ENCODE measurements at regions of chr6 and their contacts with region 1.

Region 1: GRCh38 chr6:121430514-121431460 is 4.7 kb upstream of the GJA1 start:
- DNase-seq: no peak
- H3K4me3 ChIP-seq: no peak overlapping the region
- CTCF ChIP-seq: peak; percentile 54

Region 2: DNA sequence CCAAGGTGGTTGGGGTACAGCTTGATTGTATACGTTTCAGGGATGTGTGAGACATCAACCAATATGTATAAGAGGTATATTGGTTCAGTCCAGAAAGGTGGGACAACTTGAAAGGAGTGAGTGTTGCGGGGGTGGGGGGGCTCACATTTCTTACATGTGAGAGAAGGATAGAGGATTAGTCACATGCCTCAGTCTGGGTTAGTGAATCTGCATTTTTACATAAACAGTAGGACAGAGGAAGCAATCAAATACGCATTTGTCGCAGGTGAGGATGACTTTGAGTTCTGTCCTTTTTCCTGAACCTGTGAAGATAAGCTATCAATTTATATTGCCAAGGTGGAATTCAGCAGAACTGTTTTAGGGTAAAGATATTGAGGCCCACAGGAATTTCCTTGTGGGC is 54.4 kb before region 1 on chr6:
- CTCF ChIA-PET with region 1: no interaction called
- POLR2A ChIA-PET with region 1: no interaction called
- DNase-seq: no peak
- H3K4me3 ChIP-seq: no peak overlapping the region
- CTCF ChIP-seq: no peak

Region 3: GRCh38 chr6:121450242-121450641 is 19.5 kb after region 1 on chr6:
- CTCF ChIA-PET with region 1: no interaction called
- POLR2A ChIA-PET with region 1: no interaction called
- DNase-seq: no peak
- H3K4me3 ChIP-seq: no peak overlapping the region
- CTCF ChIP-seq: no peak

Region 4: GRCh38 chr6:121544691-121545090 is 113.9 kb after region 1 on chr6:
- CTCF ChIA-PET with region 1: no interaction called
- POLR2A ChIA-PET with region 1: no interaction called
- DNase-seq: no peak
- H3K4me3 ChIP-seq: no peak overlapping the region
- CTCF ChIP-seq: no peak

Region 5: DNA sequence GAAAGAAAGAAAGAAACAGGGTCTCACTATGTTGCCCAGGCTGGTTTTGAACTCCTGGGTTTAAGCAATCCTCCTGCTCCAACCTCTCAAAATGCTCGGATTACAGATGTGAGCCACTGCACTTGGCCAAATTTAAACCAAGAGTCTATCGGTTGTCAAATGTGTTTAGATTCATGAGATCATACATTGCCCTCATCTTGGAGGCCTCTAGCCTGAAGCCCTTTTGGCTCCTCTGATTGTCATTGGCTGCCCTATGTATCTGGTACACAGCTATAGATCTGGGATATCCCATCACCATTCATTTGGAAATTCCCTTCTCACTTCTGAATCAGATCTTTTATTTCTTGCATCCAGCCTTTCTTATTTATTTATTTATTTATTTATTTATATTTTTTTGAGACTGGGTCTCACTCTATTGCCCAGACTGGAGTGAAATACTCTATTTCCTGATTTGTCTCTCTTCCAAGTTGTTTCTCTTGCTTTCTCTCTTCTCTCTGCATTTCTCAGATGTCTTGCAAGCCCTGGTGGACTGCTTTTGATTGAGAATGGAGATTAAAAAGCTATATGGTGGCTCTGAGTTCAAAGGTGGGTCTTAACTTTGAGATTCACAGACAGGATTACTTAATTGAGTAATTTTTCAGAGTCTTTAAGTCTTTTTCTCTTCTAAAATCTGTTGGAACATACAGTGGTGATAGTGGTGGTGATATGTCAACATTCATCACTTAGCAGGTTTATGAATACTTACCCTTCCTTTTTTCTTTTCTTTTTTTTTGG is 126.6 kb after region 1 on chr6:
- CTCF ChIA-PET with region 1: no interaction called
- POLR2A ChIA-PET with region 1: no interaction called
- DNase-seq: no peak
- H3K4me3 ChIP-seq: no peak overlapping the region
- CTCF ChIP-seq: no peak

Region 6: DNA sequence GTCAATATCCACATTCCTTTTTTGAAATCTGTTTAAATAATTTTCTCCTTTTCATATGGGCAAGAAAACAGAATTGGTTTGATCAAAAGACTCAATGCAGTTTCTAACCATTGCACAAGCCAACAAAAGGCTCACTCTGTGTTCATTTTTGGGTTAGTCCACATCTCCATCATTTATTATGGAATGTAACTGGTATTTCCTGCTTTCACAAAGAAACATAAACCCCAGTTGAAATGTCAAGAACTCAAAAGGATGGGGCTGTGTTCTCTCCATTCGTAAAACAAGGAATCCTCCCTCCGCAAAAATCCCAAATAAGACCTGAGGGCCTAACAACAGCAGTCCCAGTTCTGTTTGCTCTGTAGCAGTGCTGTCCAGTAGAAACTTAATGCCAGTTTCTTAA is 425.5 kb after region 1 on chr6:
- CTCF ChIA-PET with region 1: interaction called, 77 read pairs
- POLR2A ChIA-PET with region 1: no interaction called
- DNase-seq: peak; percentile 42
- H3K4me3 ChIP-seq: no peak overlapping the region
- CTCF ChIP-seq: no peak

Region 7: DNA sequence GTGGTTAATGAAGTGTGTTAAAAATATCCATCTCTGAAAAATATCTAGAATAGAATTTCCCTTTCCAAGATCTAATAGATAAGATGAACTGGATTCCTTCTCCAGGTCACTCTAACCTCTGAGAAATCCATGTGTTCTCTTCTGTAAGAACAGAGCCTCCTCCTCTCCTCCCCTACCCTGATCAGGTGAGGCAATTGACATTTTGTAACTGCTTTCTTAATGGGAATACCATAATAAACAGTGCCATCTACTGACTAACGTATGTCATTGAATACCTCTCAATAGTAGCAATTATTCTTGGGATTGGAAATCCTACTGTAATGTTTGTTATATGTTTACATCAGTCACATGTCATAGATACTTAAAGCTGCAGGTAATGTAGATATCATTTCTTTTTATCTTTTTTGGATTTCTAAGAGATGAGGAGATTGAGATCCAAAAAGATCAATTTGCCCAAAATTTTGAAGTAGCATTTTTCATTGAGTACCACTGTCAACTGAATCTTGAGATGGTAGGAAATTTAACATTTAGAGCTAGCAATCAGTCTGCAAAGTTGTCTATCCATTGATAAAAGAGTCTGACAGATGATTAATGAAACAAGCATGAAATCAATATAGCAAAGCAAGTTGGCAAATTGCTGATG is 602.9 kb after region 1 on chr6:
- CTCF ChIA-PET with region 1: interaction called, 53 read pairs
- POLR2A ChIA-PET with region 1: no interaction called
- DNase-seq: no peak
- H3K4me3 ChIP-seq: no peak overlapping the region
- CTCF ChIP-seq: peak; percentile 43

Region 8: DNA sequence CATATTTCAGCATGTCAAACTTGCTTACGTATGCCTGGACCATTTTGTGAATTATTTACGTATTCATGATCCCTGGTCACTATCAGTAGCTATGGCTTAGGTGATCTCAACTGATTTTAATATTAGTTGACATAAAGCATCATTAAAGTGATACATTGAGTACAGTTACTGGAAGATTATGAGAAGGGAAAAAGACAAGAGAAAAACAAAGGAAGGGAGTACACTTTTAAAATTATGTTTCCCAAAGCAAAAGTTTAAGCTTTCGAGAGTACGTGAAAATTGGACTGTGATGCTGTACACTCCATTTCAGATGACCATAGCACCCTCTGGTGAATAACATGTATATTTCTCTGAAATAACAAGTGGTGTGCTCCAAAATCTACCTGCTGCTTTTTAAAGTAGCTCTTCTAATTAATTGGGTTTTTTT is 753.6 kb after region 1 on chr6:
- CTCF ChIA-PET with region 1: interaction called, 131 read pairs
- POLR2A ChIA-PET with region 1: no interaction called
- DNase-seq: no peak
- H3K4me3 ChIP-seq: peak overlapping the region; percentile 9; the same call in 1 of the 2 replicates
- CTCF ChIP-seq: peak; percentile 28